ENCODE measurements at regions of chr15 and their contacts with region 1.

Region 1: DNA sequence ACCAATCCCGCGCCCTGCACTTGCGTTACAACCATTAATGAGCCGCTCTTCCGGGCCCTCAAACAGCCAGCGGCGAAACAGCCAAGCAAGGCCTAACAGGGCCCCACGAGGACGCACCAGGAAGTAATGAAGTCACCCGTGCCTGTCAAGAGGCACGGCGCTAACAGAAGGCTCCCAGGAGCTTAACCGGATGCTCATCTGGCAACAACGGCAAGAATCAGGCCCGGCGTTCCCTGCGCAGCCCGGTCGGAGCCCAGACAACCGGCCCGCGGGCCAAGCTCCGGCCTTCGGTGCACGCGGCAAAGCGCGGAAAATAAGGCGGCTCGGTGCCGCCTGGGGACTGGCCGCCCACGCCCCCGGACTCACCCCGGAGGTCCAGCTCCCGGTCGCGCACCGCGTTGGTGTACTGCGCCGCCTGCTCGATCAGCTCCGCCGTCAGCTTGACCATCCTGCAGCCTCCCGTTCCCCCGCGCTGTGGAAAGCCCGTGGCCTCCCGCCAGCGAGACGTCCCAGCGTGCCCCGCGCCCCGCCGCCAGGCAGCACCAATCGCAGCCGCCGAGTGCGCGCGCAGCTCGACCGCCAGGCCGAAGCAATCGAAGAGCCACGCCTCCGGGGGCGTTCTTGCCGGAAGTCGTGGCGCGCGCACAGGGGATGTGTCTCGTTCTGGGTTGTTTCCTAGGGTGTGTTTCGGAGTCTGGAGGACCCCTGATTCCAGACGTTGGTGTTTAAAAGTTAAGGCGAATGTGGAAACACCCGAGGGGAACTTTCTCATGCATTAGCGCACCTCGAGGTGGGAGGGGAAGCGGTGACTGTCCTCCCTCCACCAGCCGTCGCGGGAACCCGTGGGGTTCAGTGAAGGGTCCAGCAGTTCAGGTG is at the start of gene SNRPA1:
- DNase-seq: peak; percentile 97 to 99
- ATAC-seq: peak; percentile 93 to 96 (median 94)
- H3K4me3 ChIP-seq: peak within 1 kb of the TSS; percentile 58 to 99 (median 91)
- H3K27ac ChIP-seq: peak within 1 kb of the TSS; percentile 90 to 99 (median 96)
- H3K4me1 ChIP-seq: peaks cover 0 to 43% (median 34%) of the 10 kb centered on the region in 9 donors
- H3K27me3 ChIP-seq: no peaks in the 10 kb centered on the region
- CTCF ChIP-seq: no peak
- total RNA-seq, gene SNRPA1: 23.8 to 36.3 (median 29.9) TPM

Region 2: GRCh38 chr15:101372149-101372577 is 77.2 kb after region 1 on chr15:
- intact Hi-C with region 1: loop called in 1 of 10 experiments (anchors 10 kb)
- DNase-seq: no peak
- ATAC-seq: peak in 1 of 8 donors; percentile 51
- H3K4me3 ChIP-seq: no peak overlapping the region
- H3K27ac ChIP-seq: no peak overlapping the region
- H3K4me1 ChIP-seq: peaks cover 0 to 24% (median 5%) of the 10 kb centered on the region in 9 donors
- H3K27me3 ChIP-seq: no peaks in the 10 kb centered on the region
- CTCF ChIP-seq: no peak

Region 3: GRCh38 chr15:101652098-101652782 is 357.3 kb after region 1 on chr15 and contains the start of gene TM2D3:
- intact Hi-C with region 1: loop called in 3 of 10 experiments (anchors 2 to 5 kb)
- DNase-seq: peak; percentile 92 to 96
- ATAC-seq: peak; percentile 96 to 98 (median 97)
- H3K4me3 ChIP-seq: peak within 1 kb of the TSS; percentile 76 to 96 (median 90)
- H3K27ac ChIP-seq: peak within 1 kb of the TSS; percentile 92 to 99 (median 97)
- H3K4me1 ChIP-seq: peaks cover 9 to 50% (median 37%) of the 10 kb centered on the region in 9 donors
- H3K27me3 ChIP-seq: no peaks in the 10 kb centered on the region
- CTCF ChIP-seq: peak; percentile 66 to 96 (median 90)
- total RNA-seq, gene TM2D3: 38.2 to 61.6 (median 49.5) TPM